ENCODE measurements at regions of chr5 and their contacts with region 1.

Region 1: GRCh38 chr5:131589510-131590348 is 45.3 kb downstream of the RAPGEF6 start:
- H3K4me3 ChIP-seq: no peak overlapping the region
- H3K27ac ChIP-seq: no peak overlapping the region
- H3K4me1 ChIP-seq: no peaks in the 10 kb centered on the region
- CTCF ChIP-seq: peak; percentile 75

Region 2: GRCh38 chr5:131423056-131423455 is 166.7 kb before region 1 on chr5:
- CTCF ChIA-PET with region 1: interaction called, 14 read pairs
- POLR2A ChIA-PET with region 1: no interaction called
- H3K4me3 ChIP-seq: no peak overlapping the region
- H3K27ac ChIP-seq: no peak overlapping the region
- H3K4me1 ChIP-seq: no peaks in the 10 kb centered on the region
- CTCF ChIP-seq: peak; percentile 24; the same call in 1 of the 2 replicates

Region 3: DNA sequence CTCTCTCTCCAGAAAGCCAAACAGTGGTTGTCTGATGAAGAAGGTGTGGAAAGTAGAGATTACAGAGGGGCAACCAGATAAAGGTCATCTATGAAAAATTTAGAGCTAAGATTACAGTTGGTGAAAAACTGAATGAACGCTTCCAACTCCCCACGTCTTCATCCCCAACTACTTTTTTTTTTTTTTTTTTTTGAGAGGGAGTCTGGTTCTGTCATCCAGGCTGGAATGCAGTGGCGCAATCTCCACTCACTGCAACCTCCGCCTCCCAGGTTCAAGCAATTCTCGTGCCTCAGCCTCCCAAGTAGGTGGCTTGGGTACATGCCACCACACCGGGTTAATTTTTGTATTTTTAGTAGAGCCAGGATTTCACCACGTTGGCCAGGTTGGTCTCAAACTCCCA is 19.0 kb before region 1 on chr5:
- CTCF ChIA-PET with region 1: interaction called, 10 read pairs
- POLR2A ChIA-PET with region 1: no interaction called
- H3K4me3 ChIP-seq: no peak overlapping the region
- H3K27ac ChIP-seq: no peak overlapping the region
- H3K4me1 ChIP-seq: no peaks in the 10 kb centered on the region
- CTCF ChIP-seq: no peak

Region 4: GRCh38 chr5:131615957-131616356 is 26.2 kb after region 1 on chr5:
- CTCF ChIA-PET with region 1: no interaction called
- POLR2A ChIA-PET with region 1: no interaction called
- H3K4me3 ChIP-seq: no peak overlapping the region
- H3K27ac ChIP-seq: no peak overlapping the region
- H3K4me1 ChIP-seq: no peaks in the 10 kb centered on the region
- CTCF ChIP-seq: no peak

Region 5: DNA sequence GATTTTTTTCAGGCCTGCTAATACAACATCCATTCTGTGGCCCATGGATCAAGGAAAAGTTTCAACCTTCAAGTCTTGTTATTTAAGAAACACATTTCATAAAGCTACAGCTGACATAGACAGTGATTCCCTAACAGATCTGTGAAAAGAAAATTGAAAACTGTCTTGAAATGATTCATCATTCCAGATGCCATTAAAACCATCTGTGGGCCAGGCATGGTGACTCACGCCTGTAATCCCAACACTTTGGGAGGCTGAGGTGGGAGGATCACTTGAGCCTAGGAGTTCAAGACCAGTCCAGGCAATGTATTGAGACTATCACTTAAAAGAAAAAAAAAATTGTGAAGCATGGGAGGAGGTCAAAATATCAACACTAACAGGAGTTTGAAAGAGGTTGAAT is 39.3 kb after region 1 on chr5:
- CTCF ChIA-PET with region 1: interaction called, 19 read pairs
- POLR2A ChIA-PET with region 1: no interaction called
- H3K4me3 ChIP-seq: no peak overlapping the region
- H3K27ac ChIP-seq: no peak overlapping the region
- H3K4me1 ChIP-seq: peaks cover 23% of the 10 kb centered on the region
- CTCF ChIP-seq: no peak

Region 6: DNA sequence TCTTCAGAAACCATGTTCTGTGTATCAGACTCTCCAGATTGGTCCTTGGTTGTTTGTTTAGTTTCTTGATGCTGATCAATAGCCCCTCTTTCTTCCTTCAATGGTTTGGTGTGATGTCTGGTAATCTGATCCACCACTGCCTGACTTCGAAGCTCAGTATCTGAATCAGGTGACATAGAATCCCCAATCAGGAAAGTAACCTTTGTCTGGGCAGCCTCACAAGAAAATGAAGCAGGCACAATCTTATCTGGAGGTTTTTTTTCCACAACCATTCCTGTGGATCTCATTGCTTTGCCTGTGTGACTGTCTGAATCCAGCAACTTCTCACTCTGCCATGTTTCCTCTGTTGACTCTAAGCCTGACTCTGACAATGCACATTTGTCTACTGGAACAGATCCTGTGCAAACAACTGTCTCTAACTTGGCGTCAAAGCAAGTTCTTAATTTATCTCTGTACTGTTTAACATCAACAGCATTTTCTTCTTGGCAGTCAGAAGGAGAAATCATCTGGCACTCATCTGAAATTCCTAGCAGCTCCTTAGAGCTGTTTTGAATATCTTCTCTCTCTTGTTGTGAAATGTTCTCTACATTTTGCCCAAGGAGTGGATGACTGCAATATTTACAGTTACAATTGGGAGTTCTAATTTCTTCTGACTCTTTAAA is 82.4 kb after region 1 on chr5:
- CTCF ChIA-PET with region 1: no interaction called
- POLR2A ChIA-PET with region 1: no interaction called
- H3K4me3 ChIP-seq: no peak overlapping the region
- H3K27ac ChIP-seq: no peak overlapping the region
- H3K4me1 ChIP-seq: no peaks in the 10 kb centered on the region
- CTCF ChIP-seq: no peak

Region 7: GRCh38 chr5:132007399-132008165 is 417.9 kb after region 1 on chr5:
- CTCF ChIA-PET with region 1: interaction called, 129 read pairs
- POLR2A ChIA-PET with region 1: interaction called, 5 read pairs
- H3K4me3 ChIP-seq: no peak overlapping the region
- H3K27ac ChIP-seq: no peak overlapping the region
- H3K4me1 ChIP-seq: no peaks in the 10 kb centered on the region; the same call in 1 of the 2 replicates
- CTCF ChIP-seq: peak; percentile 74